ENCODE measurements at regions of chr4 and their contacts with region 1.

Region 1: GRCh38 chr4:1249148-1249730 is 309 bp upstream of the CTBP1 start:
- DNase-seq: peak; percentile 86 to 94
- ATAC-seq: peak; percentile 63 to 81 (median 70)
- H3K4me3 ChIP-seq: peak overlapping the region; percentile 64
- H3K4me3 Mint-ChIP-seq: peak overlapping the region; percentile 91
- H3K27ac ChIP-seq: peak overlapping the region; percentile 96
- H3K27ac Mint-ChIP-seq: peak overlapping the region; percentile 92 to 97
- H3K4me1 ChIP-seq: peaks cover 80% of the 10 kb centered on the region
- H3K4me1 Mint-ChIP-seq: peaks cover 69 to 78% of the 10 kb centered on the region in 2 donors
- H3K27me3 ChIP-seq: no peaks in the 10 kb centered on the region
- H3K27me3 Mint-ChIP-seq: no peaks in the 10 kb centered on the region
- CTCF ChIP-seq: no peak

Region 2: GRCh38 chr4:1177274-1178141 is 71.7 kb before region 1 on chr4:
- intact Hi-C with region 1: loop called (anchors 2 kb)
- DNase-seq: peak; percentile 79 to 87
- ATAC-seq: peak; percentile 61 to 87 (median 85)
- H3K4me3 ChIP-seq: peak overlapping the region; percentile 15
- H3K4me3 Mint-ChIP-seq: peak overlapping the region; percentile 2
- H3K27ac ChIP-seq: peak overlapping the region; percentile 82
- H3K27ac Mint-ChIP-seq: peak overlapping the region; percentile 9 to 79
- H3K4me1 ChIP-seq: peaks cover 71% of the 10 kb centered on the region
- H3K4me1 Mint-ChIP-seq: peaks cover 60 to 88% of the 10 kb centered on the region in 2 donors
- H3K27me3 ChIP-seq: peaks cover 3% of the 10 kb centered on the region
- H3K27me3 Mint-ChIP-seq: no peaks in the 10 kb centered on the region
- CTCF ChIP-seq: no peak

Region 3: DNA sequence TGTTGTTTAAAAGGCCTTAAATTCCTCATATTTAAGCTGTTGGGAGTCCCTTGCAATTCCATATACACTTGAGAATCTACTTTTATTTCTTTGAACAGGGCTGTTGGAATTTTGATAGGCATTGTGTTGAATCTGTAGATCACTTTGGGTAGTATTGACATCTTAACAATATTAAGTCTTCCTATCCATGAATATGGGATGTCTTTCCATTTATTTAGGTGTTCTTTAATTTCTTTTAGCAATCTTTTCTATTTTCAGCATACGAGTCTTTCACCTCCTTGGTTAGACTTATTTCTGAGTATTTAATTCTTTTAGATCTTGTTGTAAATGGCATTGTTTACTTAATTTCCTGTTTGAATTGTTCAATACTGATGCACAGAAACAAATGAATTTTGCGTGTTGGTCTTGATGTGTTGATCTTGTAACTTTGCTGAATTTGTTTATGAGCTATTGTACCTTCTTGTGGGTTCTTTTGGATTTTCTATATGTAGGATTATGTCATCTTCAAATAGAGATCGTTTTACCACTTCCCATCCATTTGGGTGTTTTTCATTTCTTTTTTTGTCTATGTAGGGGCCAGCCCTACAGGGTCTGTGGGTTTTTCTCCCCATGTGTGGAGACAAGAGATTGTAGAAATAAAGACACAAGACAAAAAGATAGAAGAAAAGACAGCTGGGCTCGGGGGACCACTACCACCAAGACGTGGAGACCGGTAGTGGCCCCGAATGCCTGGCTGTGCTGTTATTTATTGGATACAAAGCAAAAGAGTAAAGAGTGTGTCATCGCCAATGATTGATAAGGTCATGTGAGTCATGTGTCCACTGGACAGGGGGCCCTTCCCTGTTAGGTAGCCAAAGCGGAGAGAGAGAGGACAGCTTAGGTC is 17.9 kb after region 1 on chr4:
- intact Hi-C with region 1: loop called (anchors 2 kb)
- DNase-seq: peak in 1 of 2 donors; percentile 42
- ATAC-seq: peak in 2 of 3 donors; percentile 22 to 60
- H3K4me3 ChIP-seq: no peak overlapping the region
- H3K4me3 Mint-ChIP-seq: peak overlapping the region; percentile 64
- H3K27ac ChIP-seq: peak overlapping the region; percentile 83
- H3K27ac Mint-ChIP-seq: peak overlapping the region; percentile 92 to 95
- H3K4me1 ChIP-seq: peaks cover 7% of the 10 kb centered on the region
- H3K4me1 Mint-ChIP-seq: peaks cover 9 to 10% of the 10 kb centered on the region in 2 donors
- H3K27me3 ChIP-seq: no peaks in the 10 kb centered on the region
- H3K27me3 Mint-ChIP-seq: no peaks in the 10 kb centered on the region
- CTCF ChIP-seq: no peak

Region 4: GRCh38 chr4:1289207-1290164 is 40.2 kb after region 1 on chr4 and contains the start of gene MAEA:
- intact Hi-C with region 1: loop called (anchors 2 kb)
- DNase-seq: peak; percentile 97 to 98
- ATAC-seq: peak; percentile 94 to 99 (median 97)
- H3K4me3 ChIP-seq: peak within 1 kb of the TSS; percentile 65
- H3K4me3 Mint-ChIP-seq: peak within 1 kb of the TSS; percentile 95
- H3K27ac ChIP-seq: peak within 1 kb of the TSS; percentile 87
- H3K27ac Mint-ChIP-seq: peak within 1 kb of the TSS; percentile 87 to 90
- H3K4me1 ChIP-seq: peaks cover 38% of the 10 kb centered on the region
- H3K4me1 Mint-ChIP-seq: peaks cover 24 to 38% of the 10 kb centered on the region in 2 donors
- H3K27me3 ChIP-seq: no peaks in the 10 kb centered on the region
- H3K27me3 Mint-ChIP-seq: no peaks in the 10 kb centered on the region
- CTCF ChIP-seq: no peak
- total RNA-seq, gene MAEA: 63.5 to 89.2 (median 64.0) TPM

Region 5: GRCh38 chr4:1346781-1347409 is 97.7 kb after region 1 on chr4 and contains the start of gene UVSSA:
- intact Hi-C with region 1: loop called (anchors 1 kb)
- DNase-seq: peak; percentile 100
- ATAC-seq: peak; percentile 90 to 98 (median 91)
- H3K4me3 ChIP-seq: peak within 1 kb of the TSS; percentile 79
- H3K4me3 Mint-ChIP-seq: peak within 1 kb of the TSS; percentile 90
- H3K27ac ChIP-seq: peak within 1 kb of the TSS; percentile 91
- H3K27ac Mint-ChIP-seq: peak within 1 kb of the TSS; percentile 89 to 91
- H3K4me1 ChIP-seq: peaks cover 31% of the 10 kb centered on the region
- H3K4me1 Mint-ChIP-seq: peaks cover 40 to 41% of the 10 kb centered on the region in 2 donors
- H3K27me3 ChIP-seq: no peaks in the 10 kb centered on the region
- H3K27me3 Mint-ChIP-seq: no peaks in the 10 kb centered on the region
- CTCF ChIP-seq: no peak
- total RNA-seq, gene UVSSA: 48.0 to 59.4 (median 56.4) TPM

Measured in natural killer cell (primary cell).